HEK293 (cell line): ENCODE measurements at regions of chr15 and their contacts with region 1.

Region 1: GRCh38 chr15:70815644-70816043 is 38.3 kb downstream of the LARP6 start:
- H3K4me3 ChIP-seq: no peak overlapping the region
- H3K27ac ChIP-seq: no peak overlapping the region
- H3K4me1 ChIP-seq: no peaks in the 10 kb centered on the region
- CTCF ChIP-seq: no peak

Region 2: DNA sequence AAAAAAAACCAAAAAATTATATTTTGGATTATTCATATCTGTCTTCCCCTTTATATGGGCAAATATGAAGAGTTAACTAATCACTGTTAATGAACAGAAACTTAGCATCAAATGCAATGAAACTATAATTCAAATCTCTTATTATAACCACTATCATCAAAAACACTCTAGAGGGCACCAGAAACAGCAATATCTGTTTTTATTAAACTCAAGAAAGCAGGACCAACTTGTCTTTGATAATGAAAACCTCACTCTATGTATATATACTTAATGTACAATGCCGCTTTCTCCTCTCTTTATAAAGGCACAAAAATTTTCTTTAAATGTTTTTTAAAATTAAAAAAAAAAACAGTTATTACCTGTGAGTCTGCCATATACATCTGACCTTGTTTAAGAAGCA is 145.0 kb before region 1 on chr15:
- CTCF ChIA-PET with region 1: interaction called, 10 read pairs
- POLR2A ChIA-PET with region 1: no interaction called
- H3K4me3 ChIP-seq: no peak overlapping the region
- H3K27ac ChIP-seq: no peak overlapping the region
- H3K4me1 ChIP-seq: no peaks in the 10 kb centered on the region
- CTCF ChIP-seq: no peak

Region 3: DNA sequence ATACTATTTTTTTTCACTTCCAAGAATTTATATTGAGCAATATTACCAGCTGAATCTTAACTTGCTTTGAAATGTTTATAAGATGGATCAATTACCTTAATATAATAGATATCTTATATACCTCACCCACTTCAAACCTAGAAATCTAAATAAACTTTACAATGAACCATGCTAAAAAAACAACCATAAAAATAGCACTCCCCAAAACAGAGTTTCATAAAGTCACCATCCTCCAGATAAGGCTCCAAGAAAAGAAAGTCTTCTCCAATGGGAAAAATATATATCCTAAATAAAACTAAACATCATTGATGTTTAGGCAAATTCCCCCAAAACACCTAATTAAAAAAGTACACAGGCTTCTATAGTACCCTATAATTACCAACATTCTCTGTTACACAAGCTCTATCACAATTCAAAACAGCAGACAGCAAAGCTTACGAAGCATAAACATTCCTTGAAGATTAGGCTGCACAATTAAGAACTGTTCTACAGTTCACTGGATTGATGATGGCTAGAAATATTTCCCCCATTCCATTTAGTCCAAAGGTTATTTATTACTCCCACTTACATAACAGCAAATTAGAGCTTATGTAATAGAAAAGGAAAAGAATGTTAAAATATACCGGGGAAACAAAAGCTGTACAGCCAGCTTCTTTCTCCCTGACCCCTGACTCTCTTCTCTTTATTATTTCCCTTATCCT is 101.8 kb before region 1 on chr15:
- CTCF ChIA-PET with region 1: interaction called, 19 read pairs
- POLR2A ChIA-PET with region 1: no interaction called
- H3K4me3 ChIP-seq: no peak overlapping the region
- H3K27ac ChIP-seq: peak overlapping the region; percentile 45; the same call in 1 of the 2 replicates
- H3K4me1 ChIP-seq: peaks cover 49% of the 10 kb centered on the region
- CTCF ChIP-seq: no peak

Region 4: DNA sequence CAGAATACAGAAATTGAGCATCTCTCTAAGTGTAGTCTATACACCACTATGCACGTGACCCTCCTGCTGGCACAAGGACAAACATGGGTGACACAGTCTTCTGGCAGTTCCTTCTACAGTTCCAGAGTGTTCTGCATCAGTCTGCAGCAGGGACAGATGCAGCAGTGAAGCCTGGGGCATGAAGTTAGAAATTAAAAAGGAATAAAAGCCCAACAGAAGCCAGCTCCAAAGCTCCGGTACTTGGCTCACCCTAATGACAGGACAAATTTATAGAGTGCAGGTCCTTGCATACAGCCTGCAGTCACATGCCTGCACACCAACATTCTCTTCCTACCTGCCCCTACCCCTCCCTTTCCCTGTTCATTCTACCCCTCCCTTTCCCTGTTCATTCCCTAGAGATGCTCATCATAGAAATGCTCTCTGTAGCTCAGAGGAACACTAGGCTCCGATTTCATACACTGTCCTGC is 67.3 kb before region 1 on chr15:
- CTCF ChIA-PET with region 1: interaction called, 11 read pairs
- POLR2A ChIA-PET with region 1: no interaction called
- H3K4me3 ChIP-seq: no peak overlapping the region
- H3K27ac ChIP-seq: no peak overlapping the region
- H3K4me1 ChIP-seq: peaks cover 21% of the 10 kb centered on the region
- CTCF ChIP-seq: no peak

Region 5: DNA sequence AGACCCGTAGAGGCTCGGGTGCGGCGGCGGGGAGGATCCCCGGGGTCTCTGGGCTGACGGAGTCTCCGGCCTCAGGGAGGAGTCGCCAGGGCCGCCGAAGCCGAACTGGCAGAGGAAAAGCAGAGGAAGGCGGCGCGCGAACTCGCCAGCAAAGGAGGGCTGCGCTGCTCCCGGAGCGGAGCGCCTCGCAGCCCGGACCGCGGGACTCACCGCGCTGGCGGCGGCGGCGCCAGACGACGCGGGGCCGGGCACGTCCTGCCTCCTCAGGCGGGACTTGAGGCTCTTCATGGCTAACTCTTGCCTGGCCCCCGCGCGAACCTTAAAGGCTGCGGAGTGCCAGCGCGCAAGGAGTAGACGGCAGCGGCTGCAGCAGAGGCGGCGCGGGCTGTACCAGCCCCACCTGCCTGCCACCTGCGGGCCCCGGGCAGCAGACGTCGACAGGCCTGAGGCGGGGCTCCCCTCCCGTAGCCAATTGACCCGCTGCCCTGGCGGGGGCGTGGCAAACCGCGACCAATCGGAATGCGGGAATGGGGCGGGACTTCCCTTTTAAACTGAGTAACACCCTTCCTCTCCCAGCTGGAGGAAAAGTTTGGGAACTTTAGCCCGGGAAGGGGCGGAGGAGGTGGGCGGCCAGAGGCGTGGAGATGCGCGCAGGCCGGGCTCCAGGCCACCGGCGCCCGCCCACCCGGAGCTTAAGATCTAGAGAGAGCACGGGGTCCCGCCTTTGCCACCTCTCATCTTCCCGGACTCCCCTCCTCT is 52.3 kb before region 1 on chr15 and contains the start of gene UACA:
- CTCF ChIA-PET with region 1: interaction called, 21 read pairs
- POLR2A ChIA-PET with region 1: interaction called, 13 read pairs
- H3K4me3 ChIP-seq: peak within 1 kb of the TSS; percentile 90
- H3K27ac ChIP-seq: peak within 1 kb of the TSS; percentile 98
- H3K4me1 ChIP-seq: peaks cover 57% of the 10 kb centered on the region
- CTCF ChIP-seq: peak; percentile 50; the same call in 1 of the 2 replicates

Region 6: GRCh38 chr15:70792171-70792573 is 23.5 kb before region 1 on chr15:
- CTCF ChIA-PET with region 1: interaction called, 12 read pairs
- POLR2A ChIA-PET with region 1: no interaction called
- H3K4me3 ChIP-seq: no peak overlapping the region
- H3K27ac ChIP-seq: no peak overlapping the region
- H3K4me1 ChIP-seq: peaks cover 4% of the 10 kb centered on the region; the same call in 1 of the 2 replicates
- CTCF ChIP-seq: no peak

Region 7: GRCh38 chr15:70826634-70827033 is 11.0 kb after region 1 on chr15:
- CTCF ChIA-PET with region 1: interaction called, 44 read pairs
- POLR2A ChIA-PET with region 1: no interaction called
- H3K4me3 ChIP-seq: no peak overlapping the region
- H3K27ac ChIP-seq: no peak overlapping the region; the same call in 1 of the 2 replicates
- H3K4me1 ChIP-seq: peaks cover 4% of the 10 kb centered on the region; the same call in 1 of the 2 replicates
- CTCF ChIP-seq: no peak